Activated T-helper 2 cell treated with anti-CD3 and anti-CD28 coated beads, Interferon-gamma antibody, Interleukin-2, Interleukin-4, amounts not matched to agents 10 μg/mL and 5 μg/mL and 100 μg/mL, durations not matched to agents 14 hours and 24 hours and 36 hours (primary cell): ENCODE measurements at regions of chr1 and their contacts with region 1.

Region 1: GRCh38 chr1:89843281-89844121 is 22.7 kb downstream of the LRRC8D start:
- DNase-seq: peak; percentile 74
- H3K4me3 Mint-ChIP-seq: peak overlapping the region; percentile 93
- H3K27ac Mint-ChIP-seq: peak overlapping the region; percentile 94
- H3K4me1 Mint-ChIP-seq: peaks cover 68% of the 10 kb centered on the region
- H3K27me3 Mint-ChIP-seq: no peaks in the 10 kb centered on the region

Region 2: DNA sequence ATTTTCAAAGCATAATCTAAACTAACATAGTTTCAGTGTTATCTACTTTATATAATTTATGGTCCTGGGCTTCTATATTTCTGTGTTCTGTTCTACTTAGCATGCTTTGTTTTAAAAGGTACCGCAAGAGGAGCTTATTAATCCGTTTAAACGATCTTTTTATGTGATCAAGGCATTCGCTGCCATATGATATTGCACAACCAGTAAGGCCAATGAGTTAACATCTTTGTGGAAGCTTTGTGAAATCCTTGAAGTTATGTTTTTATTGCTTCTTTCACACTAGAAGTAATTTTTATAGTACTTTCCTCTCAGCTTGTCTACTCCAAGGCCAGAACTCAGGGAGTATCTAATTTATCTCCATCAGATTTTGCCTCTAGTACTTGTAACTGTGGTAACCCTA is 201.7 kb before region 1 on chr1:
- intact Hi-C with region 1: no loop called
- DNase-seq: no peak
- H3K4me3 Mint-ChIP-seq: no peak overlapping the region
- H3K27ac Mint-ChIP-seq: no peak overlapping the region
- H3K4me1 Mint-ChIP-seq: peaks cover 57% of the 10 kb centered on the region
- H3K27me3 Mint-ChIP-seq: no peaks in the 10 kb centered on the region

Region 3: GRCh38 chr1:89780721-89781120 is 62.8 kb before region 1 on chr1:
- intact Hi-C with region 1: loop called (anchors 2 kb)
- DNase-seq: no peak
- H3K4me3 Mint-ChIP-seq: peak overlapping the region; percentile 56
- H3K27ac Mint-ChIP-seq: peak overlapping the region; percentile 96
- H3K4me1 Mint-ChIP-seq: peaks cover 38% of the 10 kb centered on the region
- H3K27me3 Mint-ChIP-seq: no peaks in the 10 kb centered on the region

Region 4: DNA sequence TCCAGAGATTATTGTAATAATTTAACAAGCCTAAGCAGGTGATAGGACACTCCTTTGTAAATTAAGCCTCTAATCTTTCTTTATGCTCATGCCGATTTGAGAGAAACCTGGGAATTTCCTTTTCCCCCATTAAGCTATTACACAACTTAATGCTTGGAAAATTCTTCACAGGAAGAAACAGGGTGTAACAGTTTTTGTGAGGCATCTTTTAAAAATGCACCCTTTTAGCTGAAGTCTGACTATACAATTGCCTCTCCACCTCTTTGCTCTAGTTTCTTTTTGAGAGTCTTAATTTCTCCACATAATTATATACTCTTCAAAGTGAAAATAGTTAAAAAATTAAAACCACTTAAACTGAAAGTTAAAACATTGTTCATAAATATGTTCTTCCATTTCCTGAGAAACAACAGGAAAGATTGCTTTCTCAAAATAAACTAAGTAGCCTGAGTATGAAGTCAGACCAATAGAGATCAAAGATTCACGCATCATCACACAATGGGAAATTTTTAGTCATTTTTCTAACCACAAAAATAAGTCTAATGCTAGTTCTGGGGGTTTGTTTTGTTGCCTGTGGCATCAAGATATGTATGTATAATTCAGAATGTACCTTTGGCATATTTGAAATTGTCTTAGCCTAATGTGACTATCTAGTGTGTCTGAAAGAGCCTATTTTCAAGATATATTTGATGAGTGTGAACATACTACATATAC is 12.1 kb after region 1 on chr1:
- intact Hi-C with region 1: loop called (anchors 1 kb)
- DNase-seq: no peak
- H3K4me3 Mint-ChIP-seq: peak overlapping the region; percentile 68
- H3K27ac Mint-ChIP-seq: no peak overlapping the region
- H3K4me1 Mint-ChIP-seq: peaks cover 10% of the 10 kb centered on the region
- H3K27me3 Mint-ChIP-seq: no peaks in the 10 kb centered on the region

Region 5: DNA sequence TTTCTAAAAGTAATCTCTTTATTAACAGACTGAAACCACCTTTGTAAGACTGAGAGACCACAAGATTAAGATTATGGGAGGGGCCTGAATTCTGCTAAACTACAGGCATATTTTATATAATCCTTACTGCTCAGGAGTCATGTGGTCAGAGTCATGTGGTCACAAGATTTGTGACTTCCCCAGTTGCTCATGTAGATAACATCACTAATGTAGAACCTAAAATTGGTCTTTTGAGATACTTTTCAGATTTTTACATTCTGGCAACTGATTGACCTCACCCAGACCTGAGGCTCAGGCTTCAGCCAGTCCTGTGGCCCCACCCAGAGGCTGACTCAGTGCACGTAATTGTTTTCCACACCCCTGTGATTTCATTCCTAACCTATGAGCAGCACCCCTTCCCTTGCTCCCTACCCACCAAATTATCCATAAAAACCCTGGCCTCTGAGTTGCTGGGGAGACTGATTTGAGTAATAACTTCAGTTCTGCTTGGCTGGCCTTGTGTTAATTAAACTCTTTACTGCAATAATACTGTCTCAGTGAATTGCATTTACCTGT is 109.6 kb after region 1 on chr1:
- intact Hi-C with region 1: loop called (anchors 5 kb)
- DNase-seq: peak; percentile 16
- H3K4me3 Mint-ChIP-seq: no peak overlapping the region
- H3K27ac Mint-ChIP-seq: peak overlapping the region; percentile 26
- H3K4me1 Mint-ChIP-seq: peaks cover 29% of the 10 kb centered on the region
- H3K27me3 Mint-ChIP-seq: no peaks in the 10 kb centered on the region

Region 6: GRCh38 chr1:89994805-89995597 is 151.5 kb after region 1 on chr1 and contains the start of gene ZNF326:
- intact Hi-C with region 1: loop called (anchors 2 kb)
- DNase-seq: peak; percentile 92
- H3K4me3 Mint-ChIP-seq: peak within 1 kb of the TSS; percentile 98
- H3K27ac Mint-ChIP-seq: peak within 1 kb of the TSS; percentile 98
- H3K4me1 Mint-ChIP-seq: peaks cover 41% of the 10 kb centered on the region
- H3K27me3 Mint-ChIP-seq: peaks cover 5% of the 10 kb centered on the region
- total RNA-seq, gene ZNF326: 32.8 and 33.1 TPM in 2 replicates